H1 (cell line): ENCODE measurements at regions of chr3 and their contacts with region 1.

Region 1: DNA sequence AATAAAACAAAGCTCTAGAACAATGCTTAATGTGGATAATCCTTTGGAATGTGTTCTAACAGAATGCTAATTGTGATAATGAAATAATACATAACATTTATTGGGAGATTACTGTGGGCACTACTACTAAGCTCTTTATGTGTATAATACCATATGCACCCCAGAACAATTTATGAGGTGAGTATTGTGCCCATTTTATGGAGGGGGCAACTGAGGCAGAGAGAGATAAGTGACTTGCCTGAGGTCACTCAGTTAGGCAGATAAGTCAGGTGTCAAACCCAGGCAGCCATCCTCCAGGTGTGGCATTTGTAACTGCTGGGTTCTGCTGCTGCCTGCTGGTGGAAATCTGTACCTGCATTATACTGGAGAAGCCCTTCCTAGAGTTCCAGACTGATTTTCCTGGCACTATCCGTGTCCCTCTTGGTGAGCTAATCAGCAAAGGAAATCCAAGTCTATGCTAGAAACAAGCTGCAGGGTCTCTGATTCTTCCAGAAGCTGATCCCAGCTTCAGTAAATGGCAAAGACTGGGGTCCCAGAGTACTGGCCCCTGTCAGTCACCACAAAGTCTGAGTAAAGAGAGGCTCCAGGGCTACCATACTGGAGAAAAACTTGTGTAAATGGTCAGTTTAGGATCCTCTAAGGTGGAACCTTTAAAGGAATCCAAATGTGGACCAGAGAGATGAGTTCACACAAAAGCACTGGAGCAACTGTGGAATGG is 22.6 kb upstream of the RBP1 start:
- DNase-seq: no peak
- H3K4me3 ChIP-seq: no peak overlapping the region
- H3K27ac ChIP-seq: no peak overlapping the region
- H3K4me1 ChIP-seq: peaks cover 0 to 3% (median 0%) of the 10 kb centered on the region in 4 experiments; a peak in 1 of 7 replicates
- H3K27me3 ChIP-seq: no peaks in the 10 kb centered on the region
- CTCF ChIP-seq: peak; percentile 65 to 96 (median 90)
- EP300 ChIP-seq: no peak
- POLR2A ChIP-seq: no peak
- RAD21 ChIP-seq: peak; percentile 98 to 99

Region 2: DNA sequence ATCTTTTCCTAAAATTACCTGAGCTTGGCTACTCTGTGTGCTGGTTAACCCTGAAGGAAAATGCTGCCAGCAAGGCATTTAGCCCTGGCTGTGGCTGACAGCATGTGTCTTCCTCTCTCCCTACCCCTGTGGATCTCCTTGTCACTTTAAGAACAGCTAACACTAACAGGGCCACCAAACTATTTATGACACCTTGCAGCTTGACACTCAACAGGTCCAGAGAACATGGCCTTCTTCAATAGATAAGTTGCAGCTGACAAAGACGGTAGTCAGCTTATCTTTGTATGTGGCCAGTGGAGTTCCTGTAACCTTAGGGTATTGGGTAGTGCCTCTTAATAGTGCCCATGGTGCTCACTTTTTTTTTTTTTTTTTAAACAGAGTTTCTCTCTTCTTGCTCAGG is 140.7 kb before region 1 on chr3:
- CTCF ChIA-PET with region 1: interaction called, 116 read pairs
- POLR2A ChIA-PET with region 1: interaction called, 3 read pairs
- DNase-seq: no peak
- H3K4me3 ChIP-seq: no peak overlapping the region
- H3K27ac ChIP-seq: no peak overlapping the region
- H3K4me1 ChIP-seq: no peaks in the 10 kb centered on the region
- H3K27me3 ChIP-seq: no peaks in the 10 kb centered on the region
- CTCF ChIP-seq: no peak
- EP300 ChIP-seq: no peak
- POLR2A ChIP-seq: no peak
- RAD21 ChIP-seq: no peak

Region 3: GRCh38 chr3:139434764-139435307 is 127.3 kb before region 1 on chr3:
- CTCF ChIA-PET with region 1: interaction called, 27 read pairs
- POLR2A ChIA-PET with region 1: no interaction called
- DNase-seq: no peak
- H3K4me3 ChIP-seq: no peak overlapping the region
- H3K27ac ChIP-seq: no peak overlapping the region
- H3K4me1 ChIP-seq: peaks cover 0 to 3% (median 0%) of the 10 kb centered on the region in 4 experiments; a peak in 1 of 7 replicates
- H3K27me3 ChIP-seq: no peaks in the 10 kb centered on the region
- CTCF ChIP-seq: peak in 2 of 3 experiments; percentile 16 to 37; a peak in 2 of 4 replicates
- EP300 ChIP-seq: no peak
- POLR2A ChIP-seq: no peak
- RAD21 ChIP-seq: peak; percentile 24 to 37; a peak in 2 of 4 replicates

Region 4: GRCh38 chr3:139455855-139456254 is 106.3 kb before region 1 on chr3:
- CTCF ChIA-PET with region 1: interaction called, 11 read pairs
- POLR2A ChIA-PET with region 1: no interaction called
- DNase-seq: no peak
- H3K4me3 ChIP-seq: no peak overlapping the region
- H3K27ac ChIP-seq: no peak overlapping the region
- H3K4me1 ChIP-seq: peaks cover 16 to 25% (median 20%) of the 10 kb centered on the region in 4 experiments
- H3K27me3 ChIP-seq: no peaks in the 10 kb centered on the region
- CTCF ChIP-seq: peak in 2 of 3 experiments; percentile 34 to 45; a peak in 2 of 4 replicates
- EP300 ChIP-seq: no peak
- POLR2A ChIP-seq: no peak
- RAD21 ChIP-seq: peak; percentile 45 to 52

Region 5: DNA sequence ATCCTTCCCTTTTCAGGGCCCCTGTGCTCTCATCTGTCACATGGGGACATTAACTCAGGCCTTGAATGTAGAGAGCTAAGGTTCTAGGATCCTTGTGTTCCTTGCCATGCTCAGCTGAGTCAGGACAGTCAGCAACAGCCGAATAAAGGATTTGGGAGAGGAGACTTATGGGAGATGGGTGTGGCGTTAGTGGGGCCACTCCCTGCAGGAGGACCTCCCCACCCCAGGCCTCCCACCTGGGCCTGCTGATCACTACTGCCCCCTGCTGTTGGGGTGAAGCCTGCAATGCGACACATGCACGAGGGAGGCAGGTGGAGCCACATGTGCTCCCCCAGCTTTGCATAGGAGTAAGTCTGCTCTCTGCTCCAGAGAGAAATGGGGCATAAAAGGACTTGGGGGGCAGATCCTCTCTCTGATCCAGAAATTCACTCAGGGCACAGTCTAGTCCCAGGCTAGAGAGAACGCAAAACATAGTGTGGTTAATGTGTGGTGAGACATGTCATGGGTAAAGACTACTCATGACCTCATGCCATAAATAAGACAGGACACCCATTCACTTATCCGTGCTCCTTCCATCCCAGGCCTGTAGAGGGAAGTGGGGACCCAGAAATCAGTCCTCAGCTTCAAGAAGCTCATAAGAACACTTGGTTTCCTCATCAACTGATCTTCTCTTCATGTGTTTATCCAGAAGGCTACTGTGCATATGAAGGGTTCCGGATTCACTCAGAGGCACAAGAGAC is 42.0 kb before region 1 on chr3:
- CTCF ChIA-PET with region 1: interaction called, 50 read pairs
- POLR2A ChIA-PET with region 1: interaction called, 3 read pairs
- DNase-seq: peak in 1 of 2 experiments; percentile 80
- H3K4me3 ChIP-seq: no peak overlapping the region
- H3K27ac ChIP-seq: no peak overlapping the region
- H3K4me1 ChIP-seq: peaks cover 0 to 9% (median 6%) of the 10 kb centered on the region in 4 experiments; a peak in 4 of 7 replicates
- H3K27me3 ChIP-seq: peaks cover 0 to under 1% (median 0%) of the 10 kb centered on the region in 4 experiments; a peak in 3 of 7 replicates
- CTCF ChIP-seq: peak; percentile 67 to 84 (median 77)
- EP300 ChIP-seq: no peak
- POLR2A ChIP-seq: no peak
- RAD21 ChIP-seq: peak; percentile 56 to 67

Region 6: GRCh38 chr3:139541156-139541897 is 20.8 kb before region 1 on chr3:
- CTCF ChIA-PET with region 1: interaction called, 12 read pairs
- POLR2A ChIA-PET with region 1: interaction called, 6 read pairs
- DNase-seq: no peak
- H3K4me3 ChIP-seq: peak overlapping the region in 1 of 4 experiments; percentile 69; a peak in 1 of 8 replicates
- H3K27ac ChIP-seq: no peak overlapping the region
- H3K4me1 ChIP-seq: peaks cover 4 to 23% (median 13%) of the 10 kb centered on the region in 4 experiments; a peak in 6 of 7 replicates
- H3K27me3 ChIP-seq: peaks cover 0 to 24% (median 19%) of the 10 kb centered on the region in 4 experiments; a peak in 4 of 7 replicates
- CTCF ChIP-seq: no peak
- EP300 ChIP-seq: no peak
- POLR2A ChIP-seq: no peak
- RAD21 ChIP-seq: no peak